SK-N-SH (cell line): ENCODE measurements at regions of chr7 and their contacts with region 1.

Region 1: DNA sequence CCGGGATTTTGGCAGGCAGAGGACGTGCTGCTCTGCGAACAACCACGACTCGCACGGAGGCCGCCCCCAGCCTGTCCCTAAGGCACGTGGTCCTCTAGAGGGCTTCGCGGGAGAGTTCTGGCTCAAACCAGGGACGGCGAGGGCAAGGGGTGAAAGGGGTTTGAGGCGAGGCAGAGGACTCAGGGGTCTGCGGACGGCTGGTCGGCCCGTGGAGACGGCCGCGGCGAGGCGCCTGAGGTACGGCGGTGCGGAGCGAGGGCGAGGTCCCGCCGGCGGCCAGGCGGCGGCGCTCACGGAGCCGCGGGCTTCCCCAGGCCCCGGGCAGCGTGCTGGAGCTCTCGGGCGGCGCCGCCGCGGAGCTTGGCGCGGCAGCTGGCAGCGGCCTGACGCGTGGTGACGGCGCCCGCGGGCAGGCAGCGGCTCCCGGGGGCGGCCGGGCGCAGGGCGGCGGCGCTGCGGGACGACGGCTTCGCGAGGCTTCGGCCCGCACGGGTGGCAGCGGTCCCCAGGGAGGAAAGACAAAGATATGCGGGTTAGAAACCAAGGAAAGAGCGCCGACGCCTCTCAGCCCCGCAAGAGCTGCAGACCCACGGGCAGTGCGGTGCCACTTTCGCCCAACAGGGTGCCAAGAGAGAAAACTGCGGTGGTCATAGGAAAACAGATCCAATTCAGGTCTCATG is 44.8 kb downstream of the ZNF800 start:
- DNase-seq: peak; percentile 96
- H3K4me3 ChIP-seq: peak overlapping the region; percentile 30 to 46
- H3K27ac ChIP-seq: no peak overlapping the region
- H3K4me1 ChIP-seq: peaks cover 0 to 9% of the 10 kb centered on the region in 2 experiments; a peak in 2 of 4 replicates
- H3K27me3 ChIP-seq: no peaks in the 10 kb centered on the region
- CTCF ChIP-seq: peak; percentile 43
- EP300 ChIP-seq: no peak
- RAD21 ChIP-seq: peak; percentile 53; the same call in 1 of the 2 replicates

Region 2: GRCh38 chr7:126881315-126881714 is 466.4 kb before region 1 on chr7:
- CTCF ChIA-PET with region 1: no interaction called
- POLR2A ChIA-PET with region 1: no interaction called
- DNase-seq: no peak
- H3K4me3 ChIP-seq: no peak overlapping the region
- H3K27ac ChIP-seq: no peak overlapping the region
- H3K4me1 ChIP-seq: no peaks in the 10 kb centered on the region
- H3K27me3 ChIP-seq: no peaks in the 10 kb centered on the region
- CTCF ChIP-seq: no peak
- EP300 ChIP-seq: no peak
- RAD21 ChIP-seq: no peak

Region 3: DNA sequence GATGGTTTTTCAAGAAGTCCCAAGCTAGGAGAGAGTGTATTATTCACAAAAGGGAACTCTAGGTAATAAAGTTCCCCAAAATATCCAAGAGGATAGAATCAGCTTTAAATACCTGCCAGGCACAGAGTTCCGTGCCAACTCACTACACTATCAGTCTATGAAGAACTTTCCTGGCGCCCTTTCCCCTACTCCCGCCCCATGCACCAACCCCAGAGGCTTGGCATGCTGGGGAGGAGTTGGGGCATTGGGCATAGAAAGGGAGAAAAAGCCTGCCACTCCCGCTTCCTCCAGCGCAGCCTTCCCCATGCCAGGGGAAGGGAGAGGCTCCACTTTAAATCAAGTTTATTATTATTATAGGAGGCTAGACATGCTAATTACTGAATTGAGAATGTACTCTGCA is 10.1 kb before region 1 on chr7:
- CTCF ChIA-PET with region 1: interaction called, 28 read pairs
- POLR2A ChIA-PET with region 1: no interaction called
- DNase-seq: no peak
- H3K4me3 ChIP-seq: no peak overlapping the region
- H3K27ac ChIP-seq: no peak overlapping the region
- H3K4me1 ChIP-seq: no peaks in the 10 kb centered on the region
- H3K27me3 ChIP-seq: 0 out of 2 replicates have a peak, but pooled peaks cover 4% of the 10 kb centered on the region
- CTCF ChIP-seq: no peak
- EP300 ChIP-seq: no peak
- RAD21 ChIP-seq: no peak

Region 4: GRCh38 chr7:127359011-127359410 is 11.3 kb after region 1 on chr7:
- CTCF ChIA-PET with region 1: interaction called, 36 read pairs
- POLR2A ChIA-PET with region 1: no interaction called
- DNase-seq: no peak
- H3K4me3 ChIP-seq: no peak overlapping the region
- H3K27ac ChIP-seq: no peak overlapping the region
- H3K4me1 ChIP-seq: no peaks in the 10 kb centered on the region; a peak in 1 of 4 replicates
- H3K27me3 ChIP-seq: no peaks in the 10 kb centered on the region
- CTCF ChIP-seq: no peak
- EP300 ChIP-seq: no peak
- RAD21 ChIP-seq: no peak

Region 5: GRCh38 chr7:127365164-127365956 is 17.7 kb after region 1 on chr7:
- CTCF ChIA-PET with region 1: interaction called, 36 read pairs
- POLR2A ChIA-PET with region 1: no interaction called
- DNase-seq: no peak
- H3K4me3 ChIP-seq: no peak overlapping the region
- H3K27ac ChIP-seq: no peak overlapping the region
- H3K4me1 ChIP-seq: peaks cover 0 to 7% of the 10 kb centered on the region in 2 experiments; a peak in 2 of 4 replicates
- H3K27me3 ChIP-seq: no peaks in the 10 kb centered on the region
- CTCF ChIP-seq: no peak
- EP300 ChIP-seq: no peak
- RAD21 ChIP-seq: no peak

Region 6: GRCh38 chr7:127375631-127376030 is 27.9 kb after region 1 on chr7:
- CTCF ChIA-PET with region 1: interaction called, 24 read pairs
- POLR2A ChIA-PET with region 1: no interaction called
- DNase-seq: no peak
- H3K4me3 ChIP-seq: no peak overlapping the region
- H3K27ac ChIP-seq: peak overlapping the region in 1 of 2 experiments; percentile 6; a peak in 2 of 4 replicates
- H3K4me1 ChIP-seq: peaks cover 0 to 12% of the 10 kb centered on the region in 2 experiments; a peak in 2 of 4 replicates
- H3K27me3 ChIP-seq: no peaks in the 10 kb centered on the region
- CTCF ChIP-seq: no peak
- EP300 ChIP-seq: no peak
- RAD21 ChIP-seq: no peak

Region 7: DNA sequence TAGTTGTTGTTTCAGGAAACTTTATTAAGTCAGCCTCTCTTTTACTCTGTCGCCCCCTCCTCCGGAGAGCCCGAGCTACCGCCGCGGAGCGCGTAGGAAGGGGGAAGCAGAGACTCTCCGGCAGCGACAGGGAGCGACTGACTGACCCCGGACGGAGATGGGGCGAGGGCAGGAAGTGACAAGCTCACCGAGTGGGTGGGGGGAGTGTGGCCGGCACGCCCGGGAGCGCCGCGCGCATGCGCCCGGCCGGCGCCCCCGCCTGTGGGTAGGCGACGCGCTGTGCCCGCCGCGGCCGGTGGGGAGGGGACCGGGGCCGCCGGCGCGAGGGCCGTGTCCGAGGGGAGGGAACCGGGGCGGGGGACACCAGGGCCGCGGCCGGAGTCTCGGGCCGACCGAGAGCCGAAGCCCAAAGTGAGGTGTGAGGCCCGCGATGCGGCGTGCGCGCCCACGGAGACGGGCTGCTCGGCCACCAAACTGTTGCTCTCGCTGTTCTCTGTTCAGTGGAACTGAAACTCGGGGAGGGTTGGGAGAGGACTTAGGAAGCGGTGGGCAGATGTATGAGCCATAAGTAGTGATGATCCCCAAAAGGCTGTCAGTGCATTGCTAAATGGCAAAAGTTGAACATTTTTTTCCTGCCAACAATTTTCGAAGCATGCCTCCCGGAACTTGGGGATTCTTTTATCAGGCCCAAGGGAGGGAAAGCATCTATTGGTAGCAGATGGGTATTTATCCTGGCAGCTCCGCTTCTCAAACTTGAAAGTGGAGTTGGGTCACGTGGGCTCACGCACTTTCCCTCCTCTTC is 45.1 kb after region 1 on chr7 and contains the start of gene ZNF800:
- CTCF ChIA-PET with region 1: interaction called, 17 read pairs
- POLR2A ChIA-PET with region 1: interaction called, 3 read pairs
- DNase-seq: peak; percentile 100
- H3K4me3 ChIP-seq: peak within 1 kb of the TSS; percentile 97 to 98
- H3K27ac ChIP-seq: peak within 1 kb of the TSS; percentile 86 to 90
- H3K4me1 ChIP-seq: peaks cover 28 to 29% of the 10 kb centered on the region in 2 experiments; a peak in 3 of 4 replicates
- H3K27me3 ChIP-seq: no peaks in the 10 kb centered on the region
- CTCF ChIP-seq: no peak
- EP300 ChIP-seq: no peak
- RAD21 ChIP-seq: no peak
- polyA plus RNA-seq, gene ZNF800: 8.6 and 9.2 TPM in 2 replicates

Region 8: GRCh38 chr7:127514499-127514898 is 166.8 kb after region 1 on chr7:
- CTCF ChIA-PET with region 1: interaction called, 11 read pairs
- POLR2A ChIA-PET with region 1: no interaction called
- DNase-seq: peak; percentile 68
- H3K4me3 ChIP-seq: no peak overlapping the region
- H3K27ac ChIP-seq: no peak overlapping the region
- H3K4me1 ChIP-seq: no peaks in the 10 kb centered on the region
- H3K27me3 ChIP-seq: no peaks in the 10 kb centered on the region
- CTCF ChIP-seq: peak; percentile 61
- EP300 ChIP-seq: no peak
- RAD21 ChIP-seq: peak; percentile 87